IMR-90 (cell line): ENCODE measurements at regions of chr3 and their contacts with region 1.

Region 1: GRCh38 chr3:119098619-119099222 is 47.2 kb upstream of the TEX55 start:
- DNase-seq: peak; percentile 40
- ATAC-seq: peak; percentile 42; the same call in 1 of the 2 replicates
- H3K4me3 ChIP-seq: no peak overlapping the region
- H3K27ac ChIP-seq: no peak overlapping the region
- H3K4me1 ChIP-seq: no peaks in the 10 kb centered on the region
- H3K27me3 ChIP-seq: no peaks in the 10 kb centered on the region
- CTCF ChIP-seq: peak; percentile 86
- POLR2A ChIP-seq: no peak
- RAD21 ChIP-seq: peak; percentile 80

Region 2: DNA sequence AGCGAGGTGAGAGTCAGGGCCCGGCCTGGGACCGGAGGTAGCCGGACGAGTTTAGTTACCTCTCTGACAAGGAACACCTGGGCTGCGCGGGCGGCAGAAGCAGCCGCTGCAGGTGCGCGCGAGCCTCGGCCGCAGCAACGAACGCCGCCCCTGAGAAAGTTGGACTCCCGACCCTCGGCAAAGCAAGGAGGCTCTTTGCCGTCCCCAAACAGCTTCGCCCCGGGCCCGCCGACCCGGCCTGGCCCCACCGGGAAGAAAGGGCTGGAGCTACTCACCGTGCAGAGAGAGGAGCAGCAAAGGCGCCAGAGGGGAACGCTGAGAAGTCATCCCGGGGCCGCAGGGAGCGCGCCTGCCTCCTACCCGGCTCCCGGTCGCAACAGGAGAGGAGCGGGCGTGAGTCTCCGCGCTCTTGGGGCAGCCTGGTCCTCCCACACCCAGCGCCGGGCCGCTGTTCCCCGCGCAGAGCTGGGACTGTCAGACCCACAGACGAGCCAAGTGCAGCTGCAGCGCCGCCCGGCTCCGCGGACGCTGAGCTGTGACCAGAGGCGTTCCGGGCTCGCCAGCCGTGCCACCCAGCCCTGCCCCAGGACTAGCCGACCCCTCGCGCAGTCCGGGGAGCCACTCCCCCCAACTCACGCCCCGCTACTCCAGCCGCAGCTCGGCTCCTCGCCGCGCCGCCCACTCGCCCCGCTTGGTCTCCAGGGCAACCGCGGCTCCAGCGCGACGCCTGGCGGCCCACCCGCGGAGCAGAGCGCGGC is 64.3 kb before region 1 on chr3 and contains the start of gene IGSF11:
- CTCF ChIA-PET with region 1: interaction called, 12 read pairs
- POLR2A ChIA-PET with region 1: no interaction called
- dilution Hi-C with region 1: no loop called
- in situ Hi-C with region 1: no loop called
- intact Hi-C with region 1: no loop called
- DNase-seq: peak; percentile 20
- ATAC-seq: peak; percentile 96
- H3K4me3 ChIP-seq: peak within 1 kb of the TSS; percentile 65
- H3K27ac ChIP-seq: no peak within 1 kb of the TSS
- H3K4me1 ChIP-seq: no peaks in the 10 kb centered on the region
- H3K27me3 ChIP-seq: peaks cover 17% of the 10 kb centered on the region
- CTCF ChIP-seq: peak; percentile 54
- POLR2A ChIP-seq: no peak
- RAD21 ChIP-seq: peak; percentile 8; the same call in 1 of the 2 replicates
- total RNA-seq, gene IGSF11: 0.18 TPM in 1 of 2 replicates, not detected in the other

Region 3: DNA sequence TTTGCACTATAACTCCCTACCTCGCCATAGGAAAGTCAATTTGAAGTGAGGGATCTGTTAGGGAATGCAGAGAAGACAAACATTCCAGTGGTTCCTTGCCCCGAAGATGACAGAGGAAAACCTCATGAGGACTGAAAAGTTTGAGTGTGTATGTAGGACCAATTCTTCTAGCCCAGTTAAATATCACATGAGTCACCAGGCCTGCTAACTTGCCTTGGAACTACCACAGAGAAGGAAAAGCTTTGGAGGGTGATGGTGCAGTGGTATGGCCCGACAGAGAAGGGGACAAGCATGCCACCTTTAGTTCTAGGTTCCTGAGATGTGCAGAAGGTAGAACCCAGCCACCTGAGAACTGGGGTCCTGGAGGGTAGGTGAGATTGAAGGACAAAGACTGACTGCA is 72.1 kb after region 1 on chr3:
- CTCF ChIA-PET with region 1: no interaction called
- POLR2A ChIA-PET with region 1: no interaction called
- dilution Hi-C with region 1: no loop called
- in situ Hi-C with region 1: no loop called
- intact Hi-C with region 1: no loop called
- DNase-seq: peak; percentile 42
- ATAC-seq: peak; percentile 78
- H3K4me3 ChIP-seq: no peak overlapping the region
- H3K27ac ChIP-seq: no peak overlapping the region
- H3K4me1 ChIP-seq: peaks cover 4% of the 10 kb centered on the region; the same call in 1 of the 2 replicates
- H3K27me3 ChIP-seq: no peaks in the 10 kb centered on the region
- CTCF ChIP-seq: no peak
- POLR2A ChIP-seq: no peak
- RAD21 ChIP-seq: no peak

Region 4: GRCh38 chr3:119227070-119227850 is 128.5 kb after region 1 on chr3:
- CTCF ChIA-PET with region 1: no interaction called
- POLR2A ChIA-PET with region 1: no interaction called
- dilution Hi-C with region 1: no loop called
- in situ Hi-C with region 1: no loop called
- intact Hi-C with region 1: loop called (anchors 5 kb)
- DNase-seq: no peak
- ATAC-seq: peak; percentile 45
- H3K4me3 ChIP-seq: no peak overlapping the region
- H3K27ac ChIP-seq: no peak overlapping the region
- H3K4me1 ChIP-seq: peaks cover 13% of the 10 kb centered on the region
- H3K27me3 ChIP-seq: no peaks in the 10 kb centered on the region
- CTCF ChIP-seq: no peak
- POLR2A ChIP-seq: no peak
- RAD21 ChIP-seq: no peak

Region 5: DNA sequence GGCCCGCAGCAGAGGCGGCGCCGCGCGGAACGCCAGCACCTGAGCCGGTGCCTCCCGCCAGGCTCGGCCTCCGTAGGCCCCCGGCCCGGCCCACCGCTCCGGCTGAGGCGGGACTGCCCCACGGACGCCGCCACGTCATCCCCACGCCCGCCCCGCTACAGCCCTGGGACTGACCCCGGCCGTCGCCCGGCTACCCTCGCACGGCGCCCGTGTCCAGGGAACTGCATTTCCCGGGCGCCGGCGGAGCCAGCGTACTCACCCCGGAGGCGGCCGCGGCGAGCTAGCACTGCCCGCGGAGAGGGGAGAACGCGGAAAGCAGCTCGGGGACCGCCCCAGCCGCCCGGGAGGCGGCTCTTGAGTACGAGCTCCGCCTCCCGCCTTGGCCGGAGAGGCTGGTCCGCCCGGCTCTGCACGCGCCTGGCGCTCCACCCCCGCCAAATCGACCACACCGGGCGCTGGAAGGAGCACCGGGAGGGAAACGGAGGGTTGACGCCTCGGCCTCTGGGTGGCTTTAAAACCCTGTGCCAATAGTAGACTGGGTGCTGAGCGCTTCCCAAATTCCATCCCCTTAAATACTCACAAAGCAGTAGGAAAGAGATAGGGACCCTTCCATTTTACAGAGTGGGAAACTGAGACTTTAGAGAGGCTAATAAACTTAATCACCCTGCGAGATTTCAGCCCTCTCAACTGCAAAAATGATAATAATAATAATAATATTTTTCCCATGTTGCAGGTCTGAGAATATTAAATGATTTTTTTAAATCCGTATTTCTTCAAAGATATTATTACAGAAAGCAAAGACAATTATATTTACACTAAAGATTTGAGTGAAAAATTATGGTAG is 142.1 kb after region 1 on chr3 and contains the start of gene B4GALT4:
- CTCF ChIA-PET with region 1: interaction called, 3 read pairs
- POLR2A ChIA-PET with region 1: no interaction called
- dilution Hi-C with region 1: no loop called
- in situ Hi-C with region 1: no loop called
- intact Hi-C with region 1: loop called (anchors 2 kb)
- DNase-seq: peak; percentile 84
- ATAC-seq: peak; percentile 96
- H3K4me3 ChIP-seq: peak within 1 kb of the TSS; percentile 82
- H3K27ac ChIP-seq: peak within 1 kb of the TSS; percentile 84
- H3K4me1 ChIP-seq: peaks cover 2% of the 10 kb centered on the region; the same call in 1 of the 2 replicates
- H3K27me3 ChIP-seq: no peaks in the 10 kb centered on the region
- CTCF ChIP-seq: no peak
- POLR2A ChIP-seq: peak; percentile 95
- RAD21 ChIP-seq: no peak
- total RNA-seq, gene B4GALT4: 30.3 and 30.6 TPM in 2 replicates

Region 6: GRCh38 chr3:119418641-119419040 is 319.9 kb after region 1 on chr3:
- CTCF ChIA-PET with region 1: no interaction called
- POLR2A ChIA-PET with region 1: no interaction called
- dilution Hi-C with region 1: no loop called
- in situ Hi-C with region 1: no loop called
- intact Hi-C with region 1: no loop called
- DNase-seq: peak; percentile 66
- ATAC-seq: peak; percentile 58
- H3K4me3 ChIP-seq: no peak overlapping the region
- H3K27ac ChIP-seq: no peak overlapping the region
- H3K4me1 ChIP-seq: no peaks in the 10 kb centered on the region
- H3K27me3 ChIP-seq: no peaks in the 10 kb centered on the region
- CTCF ChIP-seq: no peak
- POLR2A ChIP-seq: no peak
- RAD21 ChIP-seq: no peak